GM10248 (cell line): ENCODE measurements at regions of chr6 and their contacts with region 1.

Region 1: GRCh38 chr6:1485678-1486077 is 96.3 kb downstream of the FOXF2 start:
- DNase-seq: no peak
- CTCF ChIP-seq: no peak

Region 2: DNA sequence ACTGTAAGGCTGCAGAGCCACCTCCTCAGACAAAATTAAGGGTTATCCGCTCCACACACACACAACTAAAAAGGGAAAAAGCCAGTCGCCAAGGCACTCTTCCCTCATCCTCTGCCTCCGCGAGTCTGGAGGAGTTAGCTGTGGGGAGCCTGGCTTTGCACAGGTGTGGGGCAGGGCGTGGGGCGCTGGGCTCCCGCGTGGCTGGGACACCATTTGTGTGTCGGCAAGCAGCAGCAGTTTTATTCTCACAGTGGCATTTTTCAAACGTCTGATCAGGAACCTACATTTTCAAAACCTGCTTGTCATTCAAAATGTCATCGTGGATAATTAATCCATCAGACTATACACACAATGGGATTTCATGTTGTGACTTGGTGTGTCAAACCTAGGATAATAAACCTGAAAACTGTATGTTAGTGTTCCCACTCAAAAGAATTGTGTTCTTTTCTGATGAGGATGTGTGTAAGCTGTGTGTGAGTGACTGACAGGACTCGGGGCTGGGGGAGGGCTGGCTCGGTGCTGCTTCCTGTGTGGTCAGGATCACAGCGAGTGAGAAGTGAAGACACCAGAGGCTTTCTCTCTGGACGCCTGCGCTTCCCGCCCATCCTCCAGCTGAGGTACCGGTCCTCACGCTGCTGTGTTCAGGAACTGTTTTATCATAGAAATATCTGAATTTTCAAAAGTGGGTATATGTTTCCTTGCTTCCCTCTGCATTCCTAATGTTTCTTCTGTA is 1011.1 kb before region 1 on chr6:
- CTCF ChIA-PET with region 1: no interaction called
- POLR2A ChIA-PET with region 1: no interaction called
- DNase-seq: peak; percentile 85
- CTCF ChIP-seq: no peak

Region 3: DNA sequence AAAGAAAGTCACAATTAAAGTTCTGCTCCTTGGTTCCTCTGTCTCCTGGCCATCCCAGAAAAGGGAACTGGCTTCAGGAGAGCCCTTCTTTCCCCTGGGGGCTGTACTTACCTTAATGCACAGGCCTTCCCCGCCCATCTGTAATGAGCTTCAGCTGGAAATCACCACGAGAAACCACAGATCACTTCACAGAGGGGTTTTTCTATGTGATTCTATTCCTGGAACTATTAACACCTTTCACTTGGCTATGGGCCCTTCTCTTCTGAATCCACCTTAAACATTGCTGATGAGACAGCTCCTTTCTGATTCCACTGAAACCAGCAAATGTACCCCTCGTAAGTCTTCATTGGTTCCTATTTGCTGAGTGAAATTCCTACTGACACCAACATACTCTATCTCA is 15.6 kb before region 1 on chr6:
- CTCF ChIA-PET with region 1: interaction called, 10 read pairs
- POLR2A ChIA-PET with region 1: no interaction called
- DNase-seq: peak; percentile 47
- CTCF ChIP-seq: no peak

Region 4: GRCh38 chr6:1498491-1499113 is 12.9 kb after region 1 on chr6:
- CTCF ChIA-PET with region 1: no interaction called
- POLR2A ChIA-PET with region 1: no interaction called
- DNase-seq: no peak
- CTCF ChIP-seq: peak; percentile 21